ENCODE measurements at regions of chr2 and their contacts with region 1.

Region 1: GRCh38 chr2:28594289-28595108 is 98.6 kb downstream of the PLB1 start:
- DNase-seq: peak; percentile 78 to 96 (median 86)
- ATAC-seq: peak; percentile 86
- H3K4me3 ChIP-seq: peak overlapping the region; percentile 19
- H3K4me3 Mint-ChIP-seq: peak overlapping the region; percentile 52
- H3K27ac ChIP-seq: peak overlapping the region; percentile 50 to 72
- H3K27ac Mint-ChIP-seq: peak overlapping the region; percentile 74
- H3K4me1 ChIP-seq: peaks cover 15% of the 10 kb centered on the region
- H3K4me1 Mint-ChIP-seq: peaks cover 15% of the 10 kb centered on the region
- H3K27me3 ChIP-seq: no peaks in the 10 kb centered on the region
- H3K27me3 Mint-ChIP-seq: no peaks in the 10 kb centered on the region
- CTCF ChIP-seq: peak; percentile 82

Region 2: GRCh38 chr2:27582695-27583389 is 1011.7 kb before region 1 on chr2 and contains the start of gene ZNF512:
- CTCF ChIA-PET with region 1: no interaction called
- POLR2A ChIA-PET with region 1: no interaction called
- intact Hi-C with region 1: no loop called
- DNase-seq: peak; percentile 53 to 91 (median 70)
- ATAC-seq: peak; percentile 81
- H3K4me3 ChIP-seq: peak within 1 kb of the TSS; percentile 74
- H3K4me3 Mint-ChIP-seq: peak within 1 kb of the TSS; percentile 94
- H3K27ac ChIP-seq: peak within 1 kb of the TSS; percentile 56 to 80
- H3K27ac Mint-ChIP-seq: peak within 1 kb of the TSS; percentile 92
- H3K4me1 ChIP-seq: peaks cover 46% of the 10 kb centered on the region
- H3K4me1 Mint-ChIP-seq: peaks cover 54% of the 10 kb centered on the region
- H3K27me3 ChIP-seq: no peaks in the 10 kb centered on the region
- H3K27me3 Mint-ChIP-seq: no peaks in the 10 kb centered on the region
- CTCF ChIP-seq: no peak
- total RNA-seq, gene ZNF512: 13.6 to 14.1 TPM

Region 3: GRCh38 chr2:28583899-28584553 is 10.5 kb before region 1 on chr2:
- CTCF ChIA-PET with region 1: interaction called, 24 read pairs
- POLR2A ChIA-PET with region 1: interaction called, 3 read pairs
- intact Hi-C with region 1: no loop called
- DNase-seq: peak in 9 of 14 experiments; percentile 17 to 69 (median 33)
- ATAC-seq: no peak
- H3K4me3 ChIP-seq: no peak overlapping the region
- H3K4me3 Mint-ChIP-seq: no peak overlapping the region
- H3K27ac ChIP-seq: no peak overlapping the region
- H3K27ac Mint-ChIP-seq: no peak overlapping the region
- H3K4me1 ChIP-seq: peaks cover 28% of the 10 kb centered on the region
- H3K4me1 Mint-ChIP-seq: peaks cover 25% of the 10 kb centered on the region
- H3K27me3 ChIP-seq: no peaks in the 10 kb centered on the region
- H3K27me3 Mint-ChIP-seq: no peaks in the 10 kb centered on the region
- CTCF ChIP-seq: no peak

Region 4: GRCh38 chr2:28606986-28607441 is 12.5 kb after region 1 on chr2:
- CTCF ChIA-PET with region 1: interaction called, 17 read pairs
- POLR2A ChIA-PET with region 1: interaction called, 8 read pairs
- intact Hi-C with region 1: loop called in 1 of 2 experiments (anchors 1 kb)
- DNase-seq: no peak
- ATAC-seq: no peak
- H3K4me3 ChIP-seq: no peak overlapping the region
- H3K4me3 Mint-ChIP-seq: no peak overlapping the region
- H3K27ac ChIP-seq: no peak overlapping the region
- H3K27ac Mint-ChIP-seq: no peak overlapping the region
- H3K4me1 ChIP-seq: peaks cover 31% of the 10 kb centered on the region
- H3K4me1 Mint-ChIP-seq: peaks cover 32% of the 10 kb centered on the region
- H3K27me3 ChIP-seq: no peaks in the 10 kb centered on the region
- H3K27me3 Mint-ChIP-seq: no peaks in the 10 kb centered on the region
- CTCF ChIP-seq: no peak

Region 5: DNA sequence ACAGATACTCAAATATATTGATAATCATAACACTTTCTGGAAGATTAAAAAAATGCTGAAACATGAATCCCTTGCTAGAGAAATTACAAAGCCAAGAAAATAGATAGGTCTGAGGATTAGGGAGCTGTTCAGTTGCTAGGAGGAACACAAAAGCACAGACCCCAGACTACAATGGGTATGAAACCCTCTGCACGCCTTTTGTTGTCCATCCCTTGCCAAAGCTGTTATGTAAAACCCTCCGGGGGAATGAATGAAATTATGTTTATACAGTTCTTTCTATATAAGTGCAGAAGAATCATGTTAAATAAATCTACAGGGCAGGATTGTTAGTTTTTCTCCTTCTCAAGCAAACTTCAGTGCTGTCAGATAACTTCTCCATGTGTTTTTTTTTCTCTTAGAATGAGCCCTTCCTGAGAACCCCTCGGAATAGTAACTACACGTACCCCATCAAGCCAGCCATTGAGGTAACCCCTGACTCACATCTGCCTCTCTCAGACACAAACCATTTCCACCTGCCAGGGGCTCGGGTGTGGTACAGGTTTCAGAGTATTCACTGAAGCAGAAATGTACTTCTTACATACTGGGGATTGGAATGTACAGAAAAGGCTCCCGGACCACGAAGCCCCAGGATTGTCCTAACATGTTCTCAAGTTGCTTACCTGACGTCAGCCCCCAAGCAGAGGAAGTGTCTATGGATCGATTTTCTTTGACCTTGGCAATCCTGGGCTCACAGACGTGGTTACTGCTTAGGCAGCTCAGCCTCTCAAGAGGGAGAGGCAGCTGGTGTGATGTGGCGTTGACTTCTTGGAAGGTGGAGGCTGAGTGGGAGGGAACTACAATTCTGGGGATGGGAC is 19.4 kb after region 1 on chr2:
- CTCF ChIA-PET with region 1: interaction called, 44 read pairs
- POLR2A ChIA-PET with region 1: interaction called, 16 read pairs
- intact Hi-C with region 1: loop called (anchors 1 to 2 kb)
- DNase-seq: peak in 9 of 14 experiments; percentile 19 to 60 (median 41)
- ATAC-seq: peak; percentile 45
- H3K4me3 ChIP-seq: no peak overlapping the region
- H3K4me3 Mint-ChIP-seq: no peak overlapping the region
- H3K27ac ChIP-seq: peak overlapping the region; percentile 58 to 71
- H3K27ac Mint-ChIP-seq: no peak overlapping the region
- H3K4me1 ChIP-seq: peaks cover 73% of the 10 kb centered on the region
- H3K4me1 Mint-ChIP-seq: peaks cover 33% of the 10 kb centered on the region
- H3K27me3 ChIP-seq: no peaks in the 10 kb centered on the region
- H3K27me3 Mint-ChIP-seq: no peaks in the 10 kb centered on the region
- CTCF ChIP-seq: no peak

Region 6: GRCh38 chr2:28621172-28622100 is 26.9 kb after region 1 on chr2:
- CTCF ChIA-PET with region 1: interaction called, 60 read pairs
- POLR2A ChIA-PET with region 1: interaction called, 28 read pairs
- intact Hi-C with region 1: loop called (anchors 1 to 2 kb)
- DNase-seq: peak; percentile 55 to 96 (median 69)
- ATAC-seq: peak; percentile 86
- H3K4me3 ChIP-seq: peak overlapping the region; percentile 15
- H3K4me3 Mint-ChIP-seq: peak overlapping the region; percentile 76
- H3K27ac ChIP-seq: peak overlapping the region; percentile 93 to 98
- H3K27ac Mint-ChIP-seq: no peak overlapping the region
- H3K4me1 ChIP-seq: peaks cover 95% of the 10 kb centered on the region
- H3K4me1 Mint-ChIP-seq: peaks cover 86% of the 10 kb centered on the region
- H3K27me3 ChIP-seq: no peaks in the 10 kb centered on the region
- H3K27me3 Mint-ChIP-seq: no peaks in the 10 kb centered on the region
- CTCF ChIP-seq: no peak

Region 7: DNA sequence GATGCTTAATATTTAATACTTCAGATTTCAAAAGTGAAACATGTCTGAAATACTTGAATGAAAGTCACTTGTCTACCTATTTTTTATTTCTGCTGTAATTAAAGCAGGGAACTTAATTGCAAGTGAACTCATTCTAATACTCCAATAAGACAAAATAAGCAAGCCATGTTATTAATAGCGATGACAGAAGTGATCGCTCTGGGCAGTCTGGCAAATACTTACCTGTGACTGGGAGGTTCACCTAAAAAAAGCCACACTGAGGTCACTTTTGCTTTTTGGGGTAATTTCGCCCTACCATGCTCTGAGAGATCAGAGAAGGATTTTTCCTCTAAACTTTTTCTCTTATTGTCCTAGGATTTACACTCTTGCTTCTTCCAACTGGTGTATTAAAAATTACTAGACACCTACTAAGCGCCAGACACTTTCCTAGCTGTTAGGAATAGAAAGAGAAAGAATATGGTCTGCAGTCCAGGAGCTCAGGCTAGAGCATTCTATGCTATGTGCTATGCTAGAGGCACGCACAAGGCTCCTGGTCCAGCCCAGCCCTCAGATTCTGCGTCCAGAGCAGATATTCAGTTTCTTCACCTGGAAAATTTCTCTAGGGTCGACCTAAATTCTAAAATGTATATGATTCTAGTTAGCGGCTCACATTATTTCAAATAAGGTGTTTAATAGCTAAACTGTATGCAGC is 130.7 kb after region 1 on chr2:
- CTCF ChIA-PET with region 1: interaction called, 14 read pairs
- POLR2A ChIA-PET with region 1: no interaction called
- intact Hi-C with region 1: no loop called
- DNase-seq: no peak
- ATAC-seq: no peak
- H3K4me3 ChIP-seq: no peak overlapping the region
- H3K4me3 Mint-ChIP-seq: no peak overlapping the region
- H3K27ac ChIP-seq: no peak overlapping the region
- H3K27ac Mint-ChIP-seq: no peak overlapping the region
- H3K4me1 ChIP-seq: no peaks in the 10 kb centered on the region
- H3K4me1 Mint-ChIP-seq: no peaks in the 10 kb centered on the region
- H3K27me3 ChIP-seq: no peaks in the 10 kb centered on the region
- H3K27me3 Mint-ChIP-seq: no peaks in the 10 kb centered on the region
- CTCF ChIP-seq: no peak

Region 8: GRCh38 chr2:28870146-28870891 is 275.8 kb after region 1 on chr2 and contains the start of gene TRMT61B:
- CTCF ChIA-PET with region 1: no interaction called
- POLR2A ChIA-PET with region 1: interaction called, 10 read pairs
- intact Hi-C with region 1: no loop called
- DNase-seq: peak; percentile 92 to 99 (median 97)
- ATAC-seq: peak; percentile 92
- H3K4me3 ChIP-seq: peak within 1 kb of the TSS; percentile 88
- H3K4me3 Mint-ChIP-seq: peak within 1 kb of the TSS; percentile 99
- H3K27ac ChIP-seq: peak within 1 kb of the TSS; percentile 82 to 93
- H3K27ac Mint-ChIP-seq: peak within 1 kb of the TSS; percentile 99
- H3K4me1 ChIP-seq: peaks cover 41% of the 10 kb centered on the region
- H3K4me1 Mint-ChIP-seq: peaks cover 37% of the 10 kb centered on the region
- H3K27me3 ChIP-seq: no peaks in the 10 kb centered on the region
- H3K27me3 Mint-ChIP-seq: peaks cover 7% of the 10 kb centered on the region
- CTCF ChIP-seq: no peak
- total RNA-seq, gene TRMT61B: 18.7 to 20.8 TPM

Measured in CD4-positive, alpha-beta T cell (primary cell).